ENCODE measurements at regions of chr2 and their contacts with region 1.

Region 1: DNA sequence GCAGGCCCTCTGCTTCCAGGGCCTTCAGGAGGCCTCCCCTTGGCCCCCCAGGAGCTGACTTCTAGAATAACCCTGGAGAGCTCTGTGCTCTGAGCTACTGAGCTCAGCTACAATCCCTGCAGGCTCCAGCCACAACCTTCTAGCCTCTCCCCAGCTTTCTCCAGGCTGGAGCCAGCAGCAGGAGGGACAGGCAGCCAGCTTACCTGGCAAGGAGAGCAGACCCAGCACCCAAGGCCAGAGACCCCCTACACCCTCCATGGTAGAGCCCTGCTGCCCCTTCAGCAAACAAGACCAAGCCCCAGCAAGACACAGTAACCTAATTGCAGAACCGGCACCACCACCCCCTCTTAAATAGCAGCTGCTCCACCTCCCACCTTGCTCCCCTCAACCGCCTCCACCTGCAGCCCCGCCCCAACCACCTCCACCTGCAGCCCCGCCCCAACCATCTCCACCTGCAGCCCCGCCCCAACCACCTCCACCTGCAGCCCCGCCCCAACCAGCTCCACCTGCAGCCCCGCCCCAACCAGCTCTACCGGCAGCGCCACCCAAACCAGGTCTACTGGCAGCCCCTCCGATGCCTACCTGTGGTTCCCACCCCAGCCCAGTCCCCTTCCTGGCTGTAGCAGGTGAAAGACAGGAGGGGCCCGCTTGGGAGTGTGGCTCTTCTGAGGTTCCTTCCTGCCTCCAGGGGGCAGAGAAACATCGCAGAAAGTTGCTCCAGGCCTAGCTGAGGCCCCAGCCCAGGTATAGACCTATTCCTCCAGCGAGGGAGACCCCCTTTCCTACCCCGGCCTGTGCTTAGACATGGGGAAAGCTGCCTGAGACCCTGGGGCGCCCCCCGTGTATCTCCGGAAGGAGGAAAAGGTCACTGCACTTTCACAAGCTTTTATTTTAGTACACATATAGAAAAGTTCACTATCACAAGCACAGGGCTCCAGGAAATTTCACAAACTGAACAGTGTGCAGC is at the start of gene ASTL:
- DNase-seq: peak; percentile 92
- ATAC-seq: peak; percentile 96
- H3K4me3 Mint-ChIP-seq: peak within 1 kb of the TSS; percentile 55
- H3K27ac Mint-ChIP-seq: 0 out of 2 replicates have a peak within 1 kb of the TSS, but pooled peaks have one; percentile 79
- H3K4me1 Mint-ChIP-seq: peaks cover 10% of the 10 kb centered on the region
- H3K27me3 Mint-ChIP-seq: no peaks in the 10 kb centered on the region
- CTCF ChIP-seq: peak; percentile 39
- total RNA-seq, gene ASTL: 0.69 to 1.4 TPM (median 0.79 TPM) in 3 replicates

Region 2: GRCh38 chr2:96024336-96025193 is 113.9 kb before region 1 on chr2:
- CTCF ChIA-PET with region 1: interaction called, 25 read pairs
- POLR2A ChIA-PET with region 1: no interaction called
- DNase-seq: no peak
- ATAC-seq: no peak
- H3K4me3 Mint-ChIP-seq: no peak overlapping the region
- H3K27ac Mint-ChIP-seq: no peak overlapping the region
- H3K4me1 Mint-ChIP-seq: 0 out of 2 replicates have a peak, but pooled peaks cover 3% of the 10 kb centered on the region
- H3K27me3 Mint-ChIP-seq: no peaks in the 10 kb centered on the region
- CTCF ChIP-seq: no peak

Region 3: GRCh38 chr2:96108541-96109360 is 29.7 kb before region 1 on chr2:
- CTCF ChIA-PET with region 1: interaction called, 16 read pairs
- POLR2A ChIA-PET with region 1: no interaction called
- DNase-seq: peak; percentile 38
- ATAC-seq: peak; percentile 74
- H3K4me3 Mint-ChIP-seq: peak overlapping the region; percentile 33; the same call in 1 of the 2 replicates
- H3K27ac Mint-ChIP-seq: peak overlapping the region; percentile 19; the same call in 1 of the 2 replicates
- H3K4me1 Mint-ChIP-seq: peaks cover 23% of the 10 kb centered on the region
- H3K27me3 Mint-ChIP-seq: no peaks in the 10 kb centered on the region; the same call in 1 of the 2 replicates
- CTCF ChIP-seq: no peak

Region 4: DNA sequence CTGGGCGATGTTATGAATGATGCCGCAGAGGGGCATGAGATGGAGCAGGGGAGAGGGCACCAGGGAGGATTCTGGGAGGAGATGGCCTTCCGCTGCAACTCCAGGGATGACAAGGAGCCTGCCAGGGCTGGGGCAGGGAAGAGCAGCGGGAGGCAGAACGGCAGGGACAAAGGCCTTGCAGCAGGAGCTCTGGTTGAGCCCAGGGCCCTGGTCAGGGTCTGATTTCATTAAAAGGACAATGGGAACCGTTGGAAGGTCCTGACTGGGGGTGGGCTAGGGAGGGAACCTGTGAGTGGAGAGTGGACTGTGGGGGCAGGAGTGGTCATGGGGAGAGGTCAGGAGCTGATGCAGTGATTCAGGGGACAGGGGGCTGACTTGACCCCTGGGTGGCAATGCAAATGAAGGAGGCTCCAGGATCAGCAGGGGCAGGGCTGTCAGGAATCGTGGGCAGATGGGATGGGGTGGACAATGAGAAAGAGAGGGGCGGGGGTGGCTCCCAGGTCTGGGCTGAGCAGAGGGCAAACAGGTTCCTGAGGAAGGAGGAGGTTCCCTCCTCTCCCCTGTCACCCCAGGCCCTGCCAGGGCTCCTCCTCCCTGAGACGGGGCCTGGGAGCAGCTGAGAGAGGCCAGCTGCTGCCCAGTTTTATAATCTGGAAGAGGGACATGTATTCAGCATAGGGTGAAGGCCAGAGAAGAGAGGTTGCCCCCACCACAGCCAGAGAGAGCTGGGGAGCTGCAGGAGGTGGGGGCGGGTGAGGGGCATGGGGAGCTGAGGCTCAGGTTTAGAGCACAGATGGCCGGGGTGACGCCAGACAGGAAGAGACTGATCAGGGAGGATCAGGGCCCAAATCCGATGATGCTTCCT is 14.1 kb after region 1 on chr2:
- CTCF ChIA-PET with region 1: interaction called, 25 read pairs
- POLR2A ChIA-PET with region 1: interaction called, 6 read pairs
- DNase-seq: no peak
- ATAC-seq: peak; percentile 9
- H3K4me3 Mint-ChIP-seq: no peak overlapping the region
- H3K27ac Mint-ChIP-seq: peak overlapping the region; percentile 37
- H3K4me1 Mint-ChIP-seq: peaks cover 31% of the 10 kb centered on the region
- H3K27me3 Mint-ChIP-seq: peaks cover 4% of the 10 kb centered on the region; the same call in 1 of the 2 replicates
- CTCF ChIP-seq: no peak

Region 5: GRCh38 chr2:96180521-96180920 is 42.1 kb after region 1 on chr2:
- CTCF ChIA-PET with region 1: interaction called, 214 read pairs
- POLR2A ChIA-PET with region 1: interaction called, 4 read pairs
- DNase-seq: no peak
- ATAC-seq: no peak
- H3K4me3 Mint-ChIP-seq: no peak overlapping the region
- H3K27ac Mint-ChIP-seq: no peak overlapping the region
- H3K4me1 Mint-ChIP-seq: no peaks in the 10 kb centered on the region
- H3K27me3 Mint-ChIP-seq: no peaks in the 10 kb centered on the region
- CTCF ChIP-seq: no peak

Region 6: GRCh38 chr2:96241900-96242611 is 103.6 kb after region 1 on chr2:
- CTCF ChIA-PET with region 1: interaction called, 13 read pairs
- POLR2A ChIA-PET with region 1: no interaction called
- DNase-seq: no peak
- ATAC-seq: no peak
- H3K4me3 Mint-ChIP-seq: no peak overlapping the region
- H3K27ac Mint-ChIP-seq: no peak overlapping the region
- H3K4me1 Mint-ChIP-seq: peaks cover 8% of the 10 kb centered on the region
- H3K27me3 Mint-ChIP-seq: no peaks in the 10 kb centered on the region
- CTCF ChIP-seq: no peak

Region 7: DNA sequence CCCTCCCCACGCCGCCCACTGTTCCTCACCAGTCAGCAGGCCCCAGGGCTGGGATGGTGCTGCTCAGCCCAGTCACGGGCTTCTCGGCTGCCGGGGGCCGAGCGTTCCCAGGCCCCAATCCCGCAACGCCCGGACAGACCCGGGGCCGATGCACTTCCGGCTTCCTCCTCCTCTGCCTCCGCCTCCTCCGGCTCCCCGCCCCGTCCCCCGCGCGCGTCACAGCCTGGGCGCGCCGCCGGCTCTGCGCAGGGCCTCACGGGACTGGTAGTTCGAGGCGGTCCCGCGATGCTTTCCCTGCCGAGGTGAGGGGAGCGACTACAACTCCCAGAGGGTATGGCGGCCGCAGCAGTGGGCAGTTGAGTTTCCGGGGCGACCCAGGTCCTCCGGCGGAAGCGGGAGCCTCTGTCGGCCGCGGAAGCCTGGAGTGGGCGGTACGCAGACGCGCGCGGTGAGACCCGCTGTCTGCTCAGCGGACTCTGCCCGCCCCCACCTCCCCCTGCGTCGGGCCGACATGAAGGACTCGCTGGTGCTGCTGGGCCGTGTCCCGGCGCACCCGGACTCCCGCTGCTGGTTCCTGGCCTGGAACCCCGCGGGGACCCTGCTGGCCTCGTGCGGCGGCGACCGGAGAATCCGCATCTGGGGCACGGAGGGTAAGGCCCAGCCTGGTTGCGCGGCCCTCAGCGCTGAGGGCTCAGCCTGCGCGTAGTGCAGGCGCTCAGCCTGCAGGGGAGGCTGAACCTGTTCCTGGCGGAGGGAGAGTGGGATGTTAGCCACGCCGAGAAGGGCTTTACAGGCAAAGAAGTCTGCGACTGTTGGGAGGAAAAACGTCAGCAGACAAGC is 127.6 kb after region 1 on chr2 and contains the starts of genes CIAO1 and TMEM127:
- CTCF ChIA-PET with region 1: interaction called, 17 read pairs
- POLR2A ChIA-PET with region 1: no interaction called
- DNase-seq: peak; percentile 98
- ATAC-seq: peak; percentile 95
- H3K4me3 Mint-ChIP-seq: peak within 1 kb of the TSS; percentile 100
- H3K27ac Mint-ChIP-seq: peak within 1 kb of the TSS; percentile 99
- H3K4me1 Mint-ChIP-seq: peaks cover 20% of the 10 kb centered on the region
- H3K27me3 Mint-ChIP-seq: no peaks in the 10 kb centered on the region
- CTCF ChIP-seq: no peak
- total RNA-seq, gene CIAO1: 71.9 to 82.8 TPM (median 72.0 TPM) in 3 replicates
- total RNA-seq, gene TMEM127: 22.9 to 25.6 TPM (median 24.7 TPM) in 3 replicates

Region 8: GRCh38 chr2:96427917-96428316 is 289.5 kb after region 1 on chr2:
- CTCF ChIA-PET with region 1: no interaction called
- POLR2A ChIA-PET with region 1: no interaction called
- DNase-seq: no peak
- ATAC-seq: no peak
- H3K4me3 Mint-ChIP-seq: no peak overlapping the region
- H3K27ac Mint-ChIP-seq: no peak overlapping the region
- H3K4me1 Mint-ChIP-seq: peaks cover 9% of the 10 kb centered on the region
- H3K27me3 Mint-ChIP-seq: peaks cover 4% of the 10 kb centered on the region
- CTCF ChIP-seq: no peak